Activated B cell treated with CpG ODN at 0.5 μM for 24 hours (primary cell): ENCODE measurements at regions of chr1 and their contacts with region 1.

Region 1: GRCh38 chr1:52334906-52335528 is 31.0 kb downstream of the CC2D1B start:
- DNase-seq: no peak
- ATAC-seq: no peak
- H3K4me3 Mint-ChIP-seq: no peak overlapping the region
- H3K27ac Mint-ChIP-seq: no peak overlapping the region
- H3K4me1 Mint-ChIP-seq: no peaks in the 10 kb centered on the region
- H3K27me3 Mint-ChIP-seq: peaks cover 2% of the 10 kb centered on the region
- CTCF ChIP-seq: no peak

Region 2: GRCh38 chr1:52416811-52417210 is 81.8 kb after region 1 on chr1:
- CTCF ChIA-PET with region 1: no interaction called
- POLR2A ChIA-PET with region 1: interaction called, 11 read pairs
- intact Hi-C with region 1: no loop called
- DNase-seq: no peak
- ATAC-seq: no peak
- H3K4me3 Mint-ChIP-seq: no peak overlapping the region
- H3K27ac Mint-ChIP-seq: no peak overlapping the region
- H3K4me1 Mint-ChIP-seq: no peaks in the 10 kb centered on the region
- H3K27me3 Mint-ChIP-seq: no peaks in the 10 kb centered on the region
- CTCF ChIP-seq: no peak